ENCODE measurements at regions of chr9 and their contacts with region 1.

Region 1: GRCh38 chr9:3732077-3733038 is 206.6 kb upstream of the RFX3 start:
- DNase-seq: peak in 2 of 5 donors; percentile 31 to 44
- ATAC-seq: peak; percentile 95 to 99 (median 95)
- H3K4me3 ChIP-seq: peak overlapping the region in 5 of 12 donors; percentile 15 to 33 (median 26)
- H3K27ac ChIP-seq: peak overlapping the region in 7 of 12 donors; percentile 5 to 62 (median 35)
- H3K4me1 ChIP-seq: peaks cover 0 to 11% (median 0%) of the 10 kb centered on the region in 12 donors
- H3K27me3 ChIP-seq: no peaks in the 10 kb centered on the region
- CTCF ChIP-seq: peak; percentile 57 to 78 (median 72)
- POLR2A ChIP-seq: no peak

Region 2: GRCh38 chr9:3698076-3698475 is 34.3 kb before region 1 on chr9:
- intact Hi-C with region 1: no loop called
- DNase-seq: no peak
- ATAC-seq: no peak
- H3K4me3 ChIP-seq: no peak overlapping the region
- H3K27ac ChIP-seq: no peak overlapping the region
- H3K4me1 ChIP-seq: no peaks in the 10 kb centered on the region
- H3K27me3 ChIP-seq: peaks cover 0 to 7% (median 0%) of the 10 kb centered on the region in 9 donors
- CTCF ChIP-seq: no peak
- POLR2A ChIP-seq: no peak

Region 3: GRCh38 chr9:3804103-3804502 is 71.7 kb after region 1 on chr9:
- intact Hi-C with region 1: no loop called
- DNase-seq: no peak
- ATAC-seq: no peak
- H3K4me3 ChIP-seq: no peak overlapping the region
- H3K27ac ChIP-seq: no peak overlapping the region
- H3K4me1 ChIP-seq: no peaks in the 10 kb centered on the region
- H3K27me3 ChIP-seq: no peaks in the 10 kb centered on the region
- CTCF ChIP-seq: no peak
- POLR2A ChIP-seq: no peak

Region 4: DNA sequence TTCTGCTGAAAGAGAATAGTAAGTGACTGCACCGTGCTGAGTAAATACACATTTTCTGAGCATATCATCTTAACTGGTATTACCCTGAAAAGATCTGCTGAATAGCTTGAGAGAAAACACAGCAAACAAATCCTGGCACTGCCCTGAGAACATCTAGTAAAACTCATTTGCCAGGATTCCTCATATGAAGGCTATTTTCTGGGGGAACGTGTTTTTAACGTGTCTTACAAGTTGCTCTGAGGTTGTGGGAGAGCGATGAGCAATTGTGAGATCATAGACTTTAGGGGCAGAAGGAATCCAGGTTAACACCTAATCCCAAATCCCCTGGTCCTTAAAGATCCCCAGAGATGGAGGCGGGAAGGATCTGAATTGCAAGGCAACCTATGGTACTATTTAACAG is 125.3 kb after region 1 on chr9:
- intact Hi-C with region 1: no loop called
- DNase-seq: no peak
- ATAC-seq: no peak
- H3K4me3 ChIP-seq: no peak overlapping the region
- H3K27ac ChIP-seq: no peak overlapping the region
- H3K4me1 ChIP-seq: no peaks in the 10 kb centered on the region
- H3K27me3 ChIP-seq: no peaks in the 10 kb centered on the region
- CTCF ChIP-seq: no peak
- POLR2A ChIP-seq: no peak

Region 5: DNA sequence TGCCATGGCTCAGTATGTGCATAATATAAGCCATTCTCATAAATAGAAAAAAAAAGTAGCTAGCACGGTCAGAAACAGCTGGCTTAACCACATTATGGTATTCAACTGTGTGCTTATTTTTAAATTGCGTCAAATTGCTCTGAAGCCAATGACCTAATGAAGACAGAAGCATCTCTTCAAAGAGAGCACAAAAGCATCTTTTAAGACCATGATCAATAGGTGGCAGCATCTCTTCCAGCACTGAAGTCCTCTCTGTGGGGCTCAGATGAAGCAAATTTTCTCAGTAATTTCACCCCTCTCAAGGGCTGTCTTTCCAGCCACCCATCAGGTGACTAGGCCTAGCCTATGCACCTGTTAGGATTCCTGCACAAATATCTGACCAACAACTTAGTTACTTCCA is 316.1 kb after region 1 on chr9:
- intact Hi-C with region 1: loop called in 1 of 10 experiments (anchors 5 kb)
- DNase-seq: no peak
- ATAC-seq: no peak
- H3K4me3 ChIP-seq: no peak overlapping the region
- H3K27ac ChIP-seq: no peak overlapping the region
- H3K4me1 ChIP-seq: peaks cover 0 to 2% (median 0%) of the 10 kb centered on the region in 12 donors
- H3K27me3 ChIP-seq: no peaks in the 10 kb centered on the region
- CTCF ChIP-seq: peak in 8 of 12 donors; percentile 14 to 44 (median 28)
- POLR2A ChIP-seq: no peak

Region 6: GRCh38 chr9:4228606-4229005 is 496.2 kb after region 1 on chr9:
- intact Hi-C with region 1: loop called in 9 of 10 experiments (anchors 2 to 10 kb)
- DNase-seq: no peak
- ATAC-seq: peak in 3 of 4 donors; percentile 60 to 71 (median 68)
- H3K4me3 ChIP-seq: no peak overlapping the region
- H3K27ac ChIP-seq: no peak overlapping the region
- H3K4me1 ChIP-seq: peaks cover 0 to 10% (median 0%) of the 10 kb centered on the region in 12 donors
- H3K27me3 ChIP-seq: no peaks in the 10 kb centered on the region
- CTCF ChIP-seq: peak; percentile 27 to 71 (median 54)
- POLR2A ChIP-seq: no peak

Region 7: DNA sequence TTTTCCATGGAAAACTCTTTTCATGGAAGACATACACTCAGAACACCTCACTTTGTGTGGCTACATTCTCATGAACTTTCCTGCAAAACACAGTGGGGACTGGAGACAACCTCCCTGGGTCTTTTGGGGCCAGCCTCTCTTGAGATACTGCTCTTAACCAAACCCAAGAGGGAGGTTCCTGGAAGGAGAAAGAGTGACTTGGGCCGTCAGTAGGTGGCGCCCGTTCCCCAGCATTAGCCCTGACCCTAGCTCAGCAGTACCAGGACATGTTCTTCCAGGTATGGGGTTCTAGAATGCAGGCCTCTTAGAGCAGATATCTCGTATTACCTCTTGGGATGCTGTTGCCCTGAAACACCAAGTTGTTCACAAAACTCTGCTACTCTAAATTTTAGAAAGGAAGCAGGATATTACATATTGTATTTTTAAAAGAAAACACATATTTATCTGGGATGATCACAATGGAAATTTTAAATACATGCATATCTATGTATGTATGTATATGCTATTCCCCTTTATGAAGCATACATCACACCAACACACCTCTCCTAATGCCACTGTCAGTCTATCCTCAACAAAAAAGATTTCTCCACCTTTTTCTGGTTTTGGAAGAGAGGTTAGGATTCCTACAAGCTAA is 583.3 kb after region 1 on chr9:
- intact Hi-C with region 1: loop called in 1 of 10 experiments (anchors 5 kb)
- DNase-seq: peak; percentile 60 to 84 (median 73)
- ATAC-seq: peak; percentile 74 to 93 (median 88)
- H3K4me3 ChIP-seq: no peak overlapping the region
- H3K27ac ChIP-seq: no peak overlapping the region
- H3K4me1 ChIP-seq: peaks cover 0 to 11% (median 0%) of the 10 kb centered on the region in 12 donors
- H3K27me3 ChIP-seq: no peaks in the 10 kb centered on the region
- CTCF ChIP-seq: peak; percentile 78 to 92 (median 82)
- POLR2A ChIP-seq: no peak

Region 8: DNA sequence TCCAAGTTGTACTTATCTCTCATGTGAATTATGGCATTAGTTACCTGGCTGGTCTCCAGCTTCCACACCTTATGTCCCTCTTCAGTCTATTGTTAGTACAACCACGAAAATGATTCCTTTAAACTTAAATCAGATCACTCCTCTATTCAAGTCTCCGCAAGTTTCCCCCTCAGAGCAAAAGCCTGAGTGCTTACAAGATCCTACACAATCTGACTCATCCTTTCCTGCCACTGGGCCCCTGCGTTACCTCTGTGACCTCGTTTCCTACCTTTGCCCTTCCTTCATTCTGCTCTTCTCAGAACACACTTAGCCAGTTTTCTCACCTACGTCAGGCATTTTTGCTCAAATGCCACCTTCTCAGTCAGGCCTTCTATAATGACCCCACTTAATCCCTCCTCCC is 612.6 kb after region 1 on chr9:
- intact Hi-C with region 1: loop called in 3 of 10 experiments (anchors 2 to 10 kb)
- DNase-seq: no peak
- ATAC-seq: no peak
- H3K4me3 ChIP-seq: no peak overlapping the region
- H3K27ac ChIP-seq: no peak overlapping the region
- H3K4me1 ChIP-seq: no peaks in the 10 kb centered on the region
- H3K27me3 ChIP-seq: no peaks in the 10 kb centered on the region
- CTCF ChIP-seq: no peak
- POLR2A ChIP-seq: no peak

Region 9: GRCh38 chr9:4375424-4376200 is 643.3 kb after region 1 on chr9:
- intact Hi-C with region 1: loop called in 1 of 10 experiments (anchors 10 kb)
- DNase-seq: no peak
- ATAC-seq: peak in 3 of 4 donors; percentile 39 to 64 (median 41)
- H3K4me3 ChIP-seq: no peak overlapping the region
- H3K27ac ChIP-seq: no peak overlapping the region
- H3K4me1 ChIP-seq: no peaks in the 10 kb centered on the region
- H3K27me3 ChIP-seq: peaks cover 0 to 22% (median 0%) of the 10 kb centered on the region in 9 donors
- CTCF ChIP-seq: peak; percentile 19 to 66 (median 40)
- POLR2A ChIP-seq: no peak